IMR-90 (cell line): ENCODE measurements at regions of chr5 and their contacts with region 1.

Region 1: GRCh38 chr5:148290271-148291195 is 21.7 kb upstream of the SPINK7 start:
- DNase-seq: peak; percentile 19
- ATAC-seq: peak; percentile 54
- H3K4me3 ChIP-seq: no peak overlapping the region
- H3K27ac ChIP-seq: no peak overlapping the region
- H3K4me1 ChIP-seq: no peaks in the 10 kb centered on the region
- H3K27me3 ChIP-seq: no peaks in the 10 kb centered on the region
- CTCF ChIP-seq: peak; percentile 50
- POLR2A ChIP-seq: no peak
- RAD21 ChIP-seq: peak; percentile 52

Region 2: GRCh38 chr5:147963948-147964693 is 326.4 kb before region 1 on chr5:
- CTCF ChIA-PET with region 1: no interaction called
- POLR2A ChIA-PET with region 1: no interaction called
- dilution Hi-C with region 1: no loop called
- in situ Hi-C with region 1: no loop called
- intact Hi-C with region 1: no loop called
- DNase-seq: no peak
- ATAC-seq: no peak
- H3K4me3 ChIP-seq: no peak overlapping the region
- H3K27ac ChIP-seq: no peak overlapping the region
- H3K4me1 ChIP-seq: no peaks in the 10 kb centered on the region
- H3K27me3 ChIP-seq: no peaks in the 10 kb centered on the region
- CTCF ChIP-seq: no peak
- POLR2A ChIP-seq: no peak
- RAD21 ChIP-seq: no peak

Region 3: GRCh38 chr5:148443998-148444397 is 153.5 kb after region 1 on chr5:
- CTCF ChIA-PET with region 1: no interaction called
- POLR2A ChIA-PET with region 1: no interaction called
- dilution Hi-C with region 1: no loop called
- in situ Hi-C with region 1: no loop called
- intact Hi-C with region 1: loop called (anchors 5 kb)
- DNase-seq: peak; percentile 78
- ATAC-seq: peak; percentile 89
- H3K4me3 ChIP-seq: no peak overlapping the region
- H3K27ac ChIP-seq: no peak overlapping the region
- H3K4me1 ChIP-seq: no peaks in the 10 kb centered on the region
- H3K27me3 ChIP-seq: peaks cover 3% of the 10 kb centered on the region; the same call in 1 of the 2 replicates
- CTCF ChIP-seq: peak; percentile 77
- POLR2A ChIP-seq: no peak
- RAD21 ChIP-seq: peak; percentile 68